Activated naive CD4-positive, alpha-beta T cell treated with anti-CD3 and anti-CD28 coated beads for 36 hours (primary cell): ENCODE measurements at regions of chr3 and their contacts with region 1.

Region 1: DNA sequence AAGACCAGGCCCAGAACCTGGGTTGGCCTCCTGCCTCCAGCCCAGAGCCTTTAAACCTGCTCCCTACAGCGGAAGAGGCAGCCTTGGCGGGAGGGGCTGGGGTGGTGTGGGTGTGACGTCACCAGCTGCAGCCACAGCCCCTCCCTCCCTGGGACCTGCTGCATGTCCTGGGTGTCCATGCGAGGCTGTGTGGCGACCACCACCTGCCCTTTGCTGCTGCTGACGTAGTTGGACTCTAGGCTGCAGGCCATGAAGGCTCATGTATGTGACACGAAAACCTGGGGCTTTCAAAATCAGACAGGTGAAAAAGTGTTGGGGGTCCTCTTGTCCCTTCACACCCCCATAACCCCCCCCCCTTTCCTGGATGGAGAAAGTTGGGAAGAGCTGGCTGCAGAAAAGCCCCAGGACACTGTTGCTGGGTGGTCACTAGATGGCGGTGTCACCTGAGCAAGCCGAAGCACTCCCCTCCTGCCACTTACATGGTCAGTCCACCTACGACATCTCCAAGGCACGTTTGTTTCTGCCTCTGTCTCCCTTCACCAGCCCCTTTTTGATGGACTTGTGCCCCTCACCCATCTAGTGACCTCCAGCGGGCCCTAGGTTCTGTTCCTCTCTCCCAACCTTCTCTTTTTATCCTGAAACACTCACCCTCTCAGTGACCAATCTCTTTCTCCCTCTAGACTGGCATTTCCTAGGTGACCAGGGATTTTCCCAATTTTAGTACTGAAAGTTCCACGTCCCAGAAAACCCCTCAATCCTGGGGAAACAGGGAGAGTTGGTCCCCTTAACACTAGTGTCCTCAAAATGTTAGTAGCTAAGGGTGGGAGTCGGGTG is 35.2 kb downstream of the SLC6A20 start:
- DNase-seq: peak; percentile 57
- H3K4me3 Mint-ChIP-seq: no peak overlapping the region
- H3K27ac Mint-ChIP-seq: no peak overlapping the region
- H3K4me1 Mint-ChIP-seq: no peaks in the 10 kb centered on the region
- H3K27me3 Mint-ChIP-seq: peaks cover 2% of the 10 kb centered on the region

Region 2: DNA sequence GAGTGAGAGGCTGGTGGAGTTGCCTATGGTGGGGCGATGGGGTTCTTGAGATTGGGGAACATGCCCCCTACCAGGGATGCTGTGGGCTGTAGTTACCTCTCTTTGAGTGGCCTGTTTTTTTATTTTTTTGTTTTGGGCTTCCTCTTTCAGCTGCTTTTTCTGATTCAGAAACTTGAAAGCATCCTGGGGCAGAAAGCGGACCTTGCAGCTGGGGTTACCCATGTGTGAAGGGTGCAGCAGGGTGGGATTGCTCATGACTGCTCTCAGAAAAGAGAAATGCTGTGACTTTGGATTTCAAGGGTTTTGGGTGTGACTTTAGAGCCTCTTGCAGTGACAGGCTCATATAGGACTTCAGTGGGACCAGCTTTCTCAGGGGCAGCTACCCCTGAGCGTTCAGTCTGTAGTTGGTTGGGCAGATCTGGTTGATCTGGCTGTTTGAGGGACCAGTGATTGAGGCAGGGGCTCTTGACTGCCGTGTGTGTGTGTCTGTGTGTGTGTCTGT is 164.8 kb before region 1 on chr3:
- CTCF ChIA-PET with region 1: no interaction called
- intact Hi-C with region 1: no loop called
- DNase-seq: peak; percentile 40
- H3K4me3 Mint-ChIP-seq: peak overlapping the region; percentile 66
- H3K27ac Mint-ChIP-seq: peak overlapping the region; percentile 2
- H3K4me1 Mint-ChIP-seq: peaks cover 63% of the 10 kb centered on the region
- H3K27me3 Mint-ChIP-seq: no peaks in the 10 kb centered on the region

Region 3: GRCh38 chr3:45832691-45833090 is 71.6 kb after region 1 on chr3:
- CTCF ChIA-PET with region 1: interaction called, 6 read pairs
- intact Hi-C with region 1: loop called (anchors 1 kb)
- DNase-seq: peak; percentile 30
- H3K4me3 Mint-ChIP-seq: no peak overlapping the region
- H3K27ac Mint-ChIP-seq: no peak overlapping the region
- H3K4me1 Mint-ChIP-seq: peaks cover 3% of the 10 kb centered on the region
- H3K27me3 Mint-ChIP-seq: no peaks in the 10 kb centered on the region

Region 4: DNA sequence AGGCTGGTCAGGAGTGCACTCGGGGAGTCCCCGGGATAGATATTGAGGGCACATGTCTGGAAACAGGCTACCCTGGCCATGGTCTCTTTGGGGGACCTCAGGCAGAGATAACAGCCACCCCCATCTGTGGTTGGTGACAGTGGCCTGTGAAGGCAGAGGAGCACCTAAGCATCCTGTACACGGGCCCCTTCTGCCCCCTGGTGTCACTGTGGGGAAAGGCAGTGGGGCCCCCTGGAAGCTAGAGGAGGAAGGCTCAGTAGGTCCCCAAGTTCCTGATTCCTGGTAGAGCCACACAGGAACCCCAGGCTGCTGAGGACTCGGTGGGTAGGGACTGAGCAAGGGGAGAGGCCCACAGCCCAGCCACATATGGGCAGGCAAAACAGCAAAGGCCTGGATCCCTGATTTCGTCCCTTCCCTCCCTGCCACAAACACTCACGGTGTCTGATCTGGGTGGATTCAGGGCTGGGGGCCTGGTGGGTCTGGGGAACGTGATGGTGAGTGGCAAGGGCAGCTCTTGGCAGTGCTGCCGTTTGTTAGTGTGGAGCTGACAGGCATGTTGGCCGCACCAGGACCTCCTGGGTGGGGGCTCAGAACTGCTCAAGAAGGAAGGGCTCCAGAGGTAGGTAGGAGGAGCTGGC is 168.1 kb after region 1 on chr3:
- CTCF ChIA-PET with region 1: interaction called, 46 read pairs
- intact Hi-C with region 1: loop called (anchors 1 kb)
- DNase-seq: peak; percentile 76
- H3K4me3 Mint-ChIP-seq: no peak overlapping the region
- H3K27ac Mint-ChIP-seq: no peak overlapping the region
- H3K4me1 Mint-ChIP-seq: no peaks in the 10 kb centered on the region
- H3K27me3 Mint-ChIP-seq: no peaks in the 10 kb centered on the region